ENCODE measurements at regions of chr14 and their contacts with region 1.

Region 1: DNA sequence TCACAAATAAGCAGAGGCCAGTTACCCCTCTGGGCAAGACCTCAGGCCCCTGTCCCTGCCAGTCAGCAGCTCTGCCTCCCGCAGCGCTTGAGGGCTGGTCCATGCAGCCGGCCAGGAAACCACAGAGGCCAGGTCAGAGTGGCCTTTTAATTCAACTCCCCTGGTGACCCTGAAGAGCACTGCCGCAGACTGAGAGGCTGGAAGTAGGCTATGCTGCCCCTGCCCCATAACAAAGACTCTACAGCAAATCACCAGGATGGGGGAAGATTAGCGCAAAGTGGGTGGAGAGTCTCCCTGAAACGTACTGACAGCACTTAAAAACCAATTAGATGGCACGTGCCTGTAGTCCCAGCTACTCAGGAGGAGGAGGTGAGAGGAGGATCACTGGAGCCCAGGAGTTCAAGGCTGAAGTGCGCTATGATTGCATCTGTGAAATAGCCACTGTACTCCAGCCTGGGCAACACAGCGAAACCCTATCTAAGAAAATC is 70.5 kb downstream of the ITPK1 start:
- DNase-seq: no peak
- H3K4me3 ChIP-seq: no peak overlapping the region
- H3K27ac ChIP-seq: peak overlapping the region in 1 of 2 experiments; percentile 39
- H3K4me1 ChIP-seq: peaks cover 0 to 88% (median 55%) of the 10 kb centered on the region in 4 experiments
- H3K27me3 ChIP-seq: no peaks in the 10 kb centered on the region

Region 2: DNA sequence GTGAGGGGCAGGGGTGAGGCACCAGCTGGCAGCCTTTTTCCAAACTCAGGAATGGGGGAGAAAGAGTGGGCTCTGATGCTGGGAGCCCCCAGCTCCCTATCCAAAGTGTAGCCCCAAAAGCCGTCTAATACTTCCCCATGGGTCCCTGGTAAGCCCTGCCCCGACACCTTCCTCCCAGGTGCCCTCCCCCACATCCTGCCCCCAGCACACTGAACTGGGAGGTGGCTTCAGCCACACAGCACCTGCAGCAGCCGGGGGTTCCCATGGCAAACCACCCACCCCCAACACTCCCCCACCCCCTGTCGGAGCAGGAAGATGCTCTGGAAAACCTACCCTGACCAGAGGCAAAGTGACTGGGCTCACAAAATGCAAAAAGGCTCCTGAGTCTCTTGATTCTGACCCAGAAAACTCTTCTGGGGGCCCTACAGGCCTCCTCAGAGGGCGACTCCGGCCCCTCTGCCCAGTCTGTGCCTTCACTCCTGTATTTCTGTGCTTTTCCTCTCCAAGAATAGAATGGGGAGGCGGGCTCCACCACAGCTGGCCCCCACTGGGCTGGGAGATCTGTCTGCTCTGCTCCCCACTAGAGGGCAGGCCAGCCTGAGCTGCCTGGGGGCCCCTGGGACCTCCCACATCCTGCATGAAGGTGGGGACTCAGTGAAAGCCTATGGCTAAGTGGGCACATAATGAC is 11.1 kb before region 1 on chr14:
- CTCF ChIA-PET with region 1: interaction called, 13 read pairs
- POLR2A ChIA-PET with region 1: no interaction called
- DNase-seq: peak; percentile 38 to 64 (median 64)
- H3K4me3 ChIP-seq: no peak overlapping the region
- H3K27ac ChIP-seq: no peak overlapping the region
- H3K4me1 ChIP-seq: peaks cover 0 to 33% (median 28%) of the 10 kb centered on the region in 4 experiments
- H3K27me3 ChIP-seq: no peaks in the 10 kb centered on the region

Region 3: DNA sequence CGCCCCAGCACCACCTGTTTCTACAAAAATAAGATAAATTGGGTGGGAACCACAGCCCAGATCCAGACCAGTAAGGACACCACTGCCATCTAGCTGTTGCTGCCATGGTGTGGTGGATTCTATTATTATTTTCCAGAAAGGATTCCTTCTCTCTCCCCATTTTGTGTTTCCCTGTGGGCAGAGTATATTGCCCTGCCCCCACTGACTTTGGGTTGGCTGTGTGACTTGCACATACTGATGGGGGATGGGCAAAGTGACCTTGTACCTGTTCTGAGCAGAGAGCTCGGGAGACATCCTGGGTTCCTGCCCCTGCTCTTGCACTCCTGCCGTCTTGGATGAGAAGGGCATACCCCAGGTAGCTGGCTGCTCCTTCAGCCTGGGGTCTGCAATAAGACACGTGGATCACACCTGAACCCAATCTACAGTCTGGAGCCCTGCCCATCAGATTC is 115.1 kb after region 1 on chr14:
- CTCF ChIA-PET with region 1: no interaction called
- POLR2A ChIA-PET with region 1: no interaction called
- DNase-seq: peak; percentile 18 to 62 (median 57)
- H3K4me3 ChIP-seq: no peak overlapping the region
- H3K27ac ChIP-seq: no peak overlapping the region
- H3K4me1 ChIP-seq: no peaks in the 10 kb centered on the region
- H3K27me3 ChIP-seq: no peaks in the 10 kb centered on the region

Measured in common myeloid progenitor, CD34-positive (primary cell).